ENCODE measurements at regions of chr14 and their contacts with region 1.

Region 1: DNA sequence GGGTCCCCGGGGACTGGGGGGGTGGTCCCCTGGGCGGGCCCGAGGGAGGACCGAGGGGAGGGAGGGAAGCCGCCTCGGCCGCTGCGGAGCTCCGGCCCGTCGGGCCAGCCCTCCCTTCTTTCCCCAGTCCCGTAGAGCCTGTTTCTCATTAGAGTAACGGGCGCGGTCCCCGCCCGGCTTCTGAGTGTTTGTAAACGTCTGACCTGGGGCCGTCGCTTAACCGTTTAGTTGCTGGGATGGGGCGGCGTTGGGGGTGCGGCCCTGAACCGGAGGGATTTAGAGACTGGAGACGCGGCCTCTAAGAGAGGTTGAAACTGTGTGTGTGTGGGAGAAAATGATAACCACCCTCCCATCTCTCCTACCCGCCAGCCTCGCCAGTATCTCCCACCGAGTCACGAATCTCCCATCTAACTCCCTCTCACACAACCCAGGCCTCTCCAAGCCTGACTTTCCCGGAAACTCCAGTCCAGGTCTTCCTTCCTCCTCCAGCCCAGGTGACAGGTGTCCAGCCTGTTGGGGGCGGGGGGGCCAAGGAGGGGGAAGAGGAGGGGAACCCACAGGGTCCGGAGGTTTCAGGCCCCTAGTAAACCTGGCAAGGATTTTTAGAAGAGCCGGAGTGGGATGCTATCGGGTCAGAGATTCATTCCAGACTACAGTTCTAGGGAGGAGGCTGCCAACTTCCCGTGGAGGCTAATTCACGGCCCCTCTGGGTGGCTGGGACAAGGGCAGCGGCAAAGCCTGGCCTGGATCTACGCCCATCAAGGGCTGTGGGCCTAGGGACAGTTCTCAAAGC is 1.1 kb upstream of the NFATC4 start:
- DNase-seq: peak; percentile 91
- H3K4me3 ChIP-seq: peak overlapping the region; percentile 46 to 48
- H3K27ac ChIP-seq: peak overlapping the region; percentile 85 to 92
- H3K4me1 ChIP-seq: no peaks in the 10 kb centered on the region
- H3K27me3 ChIP-seq: no peaks in the 10 kb centered on the region
- CTCF ChIP-seq: no peak
- POLR2A ChIP-seq: peak; percentile 22

Region 2: GRCh38 chr14:24231263-24232120 is 135.4 kb before region 1 on chr14:
- intact Hi-C with region 1: no loop called
- DNase-seq: no peak
- H3K4me3 ChIP-seq: peak overlapping the region; percentile 71 to 72
- H3K27ac ChIP-seq: peak overlapping the region; percentile 83 to 88
- H3K4me1 ChIP-seq: peaks cover 7% of the 10 kb centered on the region
- H3K27me3 ChIP-seq: no peaks in the 10 kb centered on the region
- CTCF ChIP-seq: no peak
- POLR2A ChIP-seq: no peak

Region 3: GRCh38 chr14:24399999-24400718 is 33.2 kb after region 1 on chr14:
- intact Hi-C with region 1: loop called (anchors 1 kb)
- DNase-seq: no peak
- H3K4me3 ChIP-seq: peak overlapping the region; percentile 44 to 53
- H3K27ac ChIP-seq: peak overlapping the region in 1 of 2 donors; percentile 73
- H3K4me1 ChIP-seq: no peaks in the 10 kb centered on the region
- H3K27me3 ChIP-seq: no peaks in the 10 kb centered on the region
- CTCF ChIP-seq: no peak
- POLR2A ChIP-seq: no peak

Region 4: DNA sequence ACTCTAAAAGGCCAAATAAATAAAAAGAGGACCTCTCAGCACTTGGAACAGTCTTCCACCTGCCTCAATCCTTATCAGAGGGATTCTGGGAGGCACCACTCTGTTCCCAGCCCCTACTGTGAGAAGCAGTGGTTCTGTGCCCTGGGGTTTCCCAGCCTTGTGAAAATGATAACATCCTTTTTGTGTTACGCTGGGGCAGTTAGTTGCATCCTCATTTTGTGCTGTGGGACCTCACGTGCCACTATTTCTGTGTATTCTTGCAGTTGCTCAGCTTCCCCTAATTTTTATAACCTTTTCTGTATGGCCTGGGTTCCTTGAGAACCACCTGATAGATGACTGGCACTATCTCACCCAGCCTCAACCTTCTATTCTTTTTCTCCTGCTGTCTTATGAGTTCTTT is 151.9 kb after region 1 on chr14:
- intact Hi-C with region 1: no loop called
- DNase-seq: no peak
- H3K4me3 ChIP-seq: no peak overlapping the region
- H3K27ac ChIP-seq: no peak overlapping the region
- H3K4me1 ChIP-seq: no peaks in the 10 kb centered on the region
- H3K27me3 ChIP-seq: no peaks in the 10 kb centered on the region
- CTCF ChIP-seq: no peak
- POLR2A ChIP-seq: no peak